ENCODE measurements at regions of chr2 and their contacts with region 1.

Region 1: DNA sequence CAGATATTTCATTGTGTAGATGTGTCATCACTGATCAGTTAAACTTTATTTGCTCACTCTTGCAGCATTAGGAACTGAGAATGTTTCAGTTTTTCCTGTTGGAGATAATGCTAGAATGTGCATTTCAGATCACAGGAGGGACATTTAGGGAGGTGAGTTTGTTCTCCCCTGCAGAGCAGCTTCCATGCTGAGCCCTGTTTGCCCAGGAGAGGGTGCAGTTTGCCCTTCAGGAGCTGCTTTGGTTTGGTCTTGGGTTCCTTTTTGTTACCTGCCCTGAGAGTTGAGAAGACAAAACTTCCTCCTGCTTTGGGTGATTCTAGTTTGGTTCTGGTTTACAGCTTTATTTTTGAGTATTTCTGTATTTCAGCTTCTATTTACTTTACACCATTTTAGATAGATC is 49.9 kb downstream of the DGKD start:
- DNase-seq: peak; percentile 45 to 84 (median 73)
- ATAC-seq: peak; percentile 77
- H3K4me3 ChIP-seq: no peak overlapping the region
- H3K4me3 Mint-ChIP-seq: peak overlapping the region; percentile 26
- H3K27ac ChIP-seq: no peak overlapping the region
- H3K27ac Mint-ChIP-seq: peak overlapping the region; percentile 87
- H3K4me1 ChIP-seq: peaks cover 77% of the 10 kb centered on the region
- H3K4me1 Mint-ChIP-seq: peaks cover 81% of the 10 kb centered on the region
- H3K27me3 ChIP-seq: no peaks in the 10 kb centered on the region
- H3K27me3 Mint-ChIP-seq: no peaks in the 10 kb centered on the region
- CTCF ChIP-seq: peak; percentile 90

Region 2: GRCh38 chr2:233372855-233373254 is 31.4 kb before region 1 on chr2:
- CTCF ChIA-PET with region 1: interaction called, 10 read pairs
- POLR2A ChIA-PET with region 1: no interaction called
- intact Hi-C with region 1: no loop called
- DNase-seq: no peak
- ATAC-seq: no peak
- H3K4me3 ChIP-seq: no peak overlapping the region
- H3K4me3 Mint-ChIP-seq: no peak overlapping the region
- H3K27ac ChIP-seq: no peak overlapping the region
- H3K27ac Mint-ChIP-seq: no peak overlapping the region
- H3K4me1 ChIP-seq: peaks cover 16% of the 10 kb centered on the region
- H3K4me1 Mint-ChIP-seq: peaks cover 46% of the 10 kb centered on the region
- H3K27me3 ChIP-seq: no peaks in the 10 kb centered on the region
- H3K27me3 Mint-ChIP-seq: no peaks in the 10 kb centered on the region
- CTCF ChIP-seq: no peak

Region 3: GRCh38 chr2:233387667-233388528 is 16.3 kb before region 1 on chr2:
- CTCF ChIA-PET with region 1: interaction called, 65 read pairs
- POLR2A ChIA-PET with region 1: interaction called, 4 read pairs
- intact Hi-C with region 1: loop called in 1 of 2 experiments (anchors 2 kb)
- DNase-seq: peak in 4 of 9 experiments; percentile 34 to 71 (median 52)
- ATAC-seq: peak; percentile 41
- H3K4me3 ChIP-seq: no peak overlapping the region
- H3K4me3 Mint-ChIP-seq: peak overlapping the region; percentile 75
- H3K27ac ChIP-seq: peak overlapping the region in 1 of 2 experiments; percentile 78
- H3K27ac Mint-ChIP-seq: peak overlapping the region; percentile 96
- H3K4me1 ChIP-seq: peaks cover 68% of the 10 kb centered on the region
- H3K4me1 Mint-ChIP-seq: peaks cover 75% of the 10 kb centered on the region
- H3K27me3 ChIP-seq: no peaks in the 10 kb centered on the region
- H3K27me3 Mint-ChIP-seq: no peaks in the 10 kb centered on the region
- CTCF ChIP-seq: no peak

Region 4: GRCh38 chr2:233418761-233419625 is 14.8 kb after region 1 on chr2:
- CTCF ChIA-PET with region 1: interaction called, 847 read pairs
- POLR2A ChIA-PET with region 1: interaction called, 9 read pairs
- intact Hi-C with region 1: loop called (anchors 1 kb)
- DNase-seq: peak; percentile 12 to 88 (median 74)
- ATAC-seq: peak; percentile 72
- H3K4me3 ChIP-seq: peak overlapping the region; percentile 44 to 61
- H3K4me3 Mint-ChIP-seq: peak overlapping the region; percentile 89
- H3K27ac ChIP-seq: peak overlapping the region; percentile 55 to 65
- H3K27ac Mint-ChIP-seq: peak overlapping the region; percentile 98
- H3K4me1 ChIP-seq: peaks cover 96% of the 10 kb centered on the region
- H3K4me1 Mint-ChIP-seq: peaks cover 96% of the 10 kb centered on the region
- H3K27me3 ChIP-seq: no peaks in the 10 kb centered on the region
- H3K27me3 Mint-ChIP-seq: no peaks in the 10 kb centered on the region
- CTCF ChIP-seq: no peak